HEK293 (cell line): ENCODE measurements at regions of chr10 and their contacts with region 1.

Region 1: GRCh38 chr10:127679642-127680255 is 57.2 kb upstream of the FOXI2 start:
- H3K4me3 ChIP-seq: no peak overlapping the region
- H3K27ac ChIP-seq: no peak overlapping the region
- H3K4me1 ChIP-seq: no peaks in the 10 kb centered on the region; the same call in 1 of the 2 replicates
- CTCF ChIP-seq: no peak

Region 2: DNA sequence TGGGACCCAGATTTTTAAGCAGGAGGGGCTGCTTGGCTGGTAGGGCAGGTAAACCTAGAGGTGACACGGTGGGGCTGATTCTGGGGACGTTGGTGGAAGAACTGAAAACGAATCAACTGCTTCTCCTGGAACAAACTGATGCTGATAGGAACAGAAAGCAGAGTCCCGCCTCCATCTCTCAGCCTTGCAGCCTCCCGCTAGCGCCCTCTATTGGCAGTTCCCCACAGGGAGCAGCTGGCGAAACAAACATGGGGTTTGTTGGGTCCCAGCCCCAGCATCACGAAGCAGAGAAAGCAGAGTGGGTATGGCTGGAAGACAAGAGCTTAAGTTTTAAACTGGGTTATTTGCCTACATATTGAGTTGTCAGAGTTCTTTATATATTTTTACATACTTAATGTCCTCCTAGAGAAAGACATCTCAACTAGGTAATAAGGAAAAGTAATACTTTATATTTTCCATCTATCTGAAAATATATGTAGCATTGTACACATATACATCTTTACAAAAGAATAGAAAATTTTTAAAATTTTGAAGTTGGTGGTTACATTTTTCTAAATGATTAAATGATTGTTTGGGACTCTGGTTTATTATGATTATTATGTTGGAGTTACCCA is 14.9 kb after region 1 on chr10:
- CTCF ChIA-PET with region 1: interaction called, 17 read pairs
- POLR2A ChIA-PET with region 1: no interaction called
- H3K4me3 ChIP-seq: no peak overlapping the region
- H3K27ac ChIP-seq: no peak overlapping the region
- H3K4me1 ChIP-seq: no peaks in the 10 kb centered on the region
- CTCF ChIP-seq: no peak

Region 3: GRCh38 chr10:127853868-127854768 is 174.4 kb after region 1 on chr10:
- CTCF ChIA-PET with region 1: interaction called, 15 read pairs
- POLR2A ChIA-PET with region 1: no interaction called
- H3K4me3 ChIP-seq: no peak overlapping the region
- H3K27ac ChIP-seq: no peak overlapping the region
- H3K4me1 ChIP-seq: no peaks in the 10 kb centered on the region
- CTCF ChIP-seq: peak; percentile 80